H1 (cell line): ENCODE measurements at regions of chr12 and their contacts with region 1.

Region 1: DNA sequence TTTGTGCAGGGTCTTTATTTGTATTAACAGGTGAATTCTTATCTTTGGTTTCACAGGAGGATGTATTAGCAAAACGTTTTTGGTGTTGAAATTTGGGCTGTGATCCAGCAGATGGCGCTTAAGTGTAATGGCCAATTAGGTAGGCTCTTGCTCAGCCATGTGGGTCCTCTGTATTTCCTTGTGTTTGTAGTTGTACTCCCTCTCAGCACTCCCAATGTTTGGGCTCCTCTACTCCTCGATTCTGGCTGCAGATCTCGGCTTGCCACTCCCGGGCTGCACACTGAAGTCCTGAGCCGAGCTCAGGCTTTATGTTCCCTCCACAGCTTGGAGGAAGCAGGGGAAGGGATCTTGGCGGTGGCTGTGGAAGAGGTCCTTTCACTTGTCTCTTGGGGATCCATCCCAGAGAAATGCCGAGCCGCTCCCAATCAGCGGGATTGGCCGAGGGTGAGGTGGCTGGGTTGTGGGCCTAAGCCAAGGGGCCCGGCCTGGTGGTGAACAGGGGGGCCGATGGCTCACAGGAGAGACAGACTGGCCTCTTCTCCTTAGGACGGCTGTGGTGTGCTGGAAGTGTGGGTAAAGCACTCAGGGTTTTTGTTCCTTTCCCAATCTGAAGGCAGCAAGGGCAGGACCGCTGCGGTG is 133.7 kb downstream of the AEBP2 start:
- DNase-seq: peak; percentile 34 to 69
- H3K4me3 ChIP-seq: no peak overlapping the region
- H3K27ac ChIP-seq: no peak overlapping the region
- H3K4me1 ChIP-seq: peaks cover 0 to 14% (median under 1%) of the 10 kb centered on the region in 4 experiments; a peak in 5 of 7 replicates
- H3K27me3 ChIP-seq: no peaks in the 10 kb centered on the region
- CTCF ChIP-seq: peak in 2 of 3 experiments; percentile 76 to 81; a peak in 3 of 4 replicates
- EP300 ChIP-seq: no peak
- POLR2A ChIP-seq: no peak
- RAD21 ChIP-seq: peak; percentile 86 to 87

Region 2: GRCh38 chr12:19546027-19546426 is 27.0 kb before region 1 on chr12:
- CTCF ChIA-PET with region 1: no interaction called
- POLR2A ChIA-PET with region 1: no interaction called
- DNase-seq: no peak
- H3K4me3 ChIP-seq: no peak overlapping the region
- H3K27ac ChIP-seq: no peak overlapping the region
- H3K4me1 ChIP-seq: no peaks in the 10 kb centered on the region
- H3K27me3 ChIP-seq: no peaks in the 10 kb centered on the region
- CTCF ChIP-seq: no peak
- EP300 ChIP-seq: no peak
- POLR2A ChIP-seq: no peak
- RAD21 ChIP-seq: no peak

Region 3: GRCh38 chr12:19588951-19589350 is 15.9 kb after region 1 on chr12:
- CTCF ChIA-PET with region 1: interaction called, 12 read pairs
- POLR2A ChIA-PET with region 1: interaction called, 3 read pairs
- DNase-seq: no peak
- H3K4me3 ChIP-seq: no peak overlapping the region
- H3K27ac ChIP-seq: no peak overlapping the region
- H3K4me1 ChIP-seq: no peaks in the 10 kb centered on the region
- H3K27me3 ChIP-seq: no peaks in the 10 kb centered on the region
- CTCF ChIP-seq: no peak
- EP300 ChIP-seq: no peak
- POLR2A ChIP-seq: no peak
- RAD21 ChIP-seq: no peak

Region 4: GRCh38 chr12:19643635-19644034 is 70.6 kb after region 1 on chr12:
- CTCF ChIA-PET with region 1: interaction called, 18 read pairs
- POLR2A ChIA-PET with region 1: interaction called, 3 read pairs
- DNase-seq: peak in 1 of 2 experiments; percentile 51
- H3K4me3 ChIP-seq: no peak overlapping the region
- H3K27ac ChIP-seq: no peak overlapping the region
- H3K4me1 ChIP-seq: peaks cover 0 to 4% (median 3%) of the 10 kb centered on the region in 4 experiments; a peak in 3 of 7 replicates
- H3K27me3 ChIP-seq: no peaks in the 10 kb centered on the region
- CTCF ChIP-seq: peak in 2 of 3 experiments; percentile 51 to 64; a peak in 2 of 4 replicates
- EP300 ChIP-seq: no peak
- POLR2A ChIP-seq: no peak
- RAD21 ChIP-seq: peak; percentile 65 to 69